Activated CD8-positive, alpha-beta T cell treated with anti-CD3 and anti-CD28 coated beads for 36 hours (primary cell): ENCODE measurements at regions of chr1 and their contacts with region 1.

Region 1: DNA sequence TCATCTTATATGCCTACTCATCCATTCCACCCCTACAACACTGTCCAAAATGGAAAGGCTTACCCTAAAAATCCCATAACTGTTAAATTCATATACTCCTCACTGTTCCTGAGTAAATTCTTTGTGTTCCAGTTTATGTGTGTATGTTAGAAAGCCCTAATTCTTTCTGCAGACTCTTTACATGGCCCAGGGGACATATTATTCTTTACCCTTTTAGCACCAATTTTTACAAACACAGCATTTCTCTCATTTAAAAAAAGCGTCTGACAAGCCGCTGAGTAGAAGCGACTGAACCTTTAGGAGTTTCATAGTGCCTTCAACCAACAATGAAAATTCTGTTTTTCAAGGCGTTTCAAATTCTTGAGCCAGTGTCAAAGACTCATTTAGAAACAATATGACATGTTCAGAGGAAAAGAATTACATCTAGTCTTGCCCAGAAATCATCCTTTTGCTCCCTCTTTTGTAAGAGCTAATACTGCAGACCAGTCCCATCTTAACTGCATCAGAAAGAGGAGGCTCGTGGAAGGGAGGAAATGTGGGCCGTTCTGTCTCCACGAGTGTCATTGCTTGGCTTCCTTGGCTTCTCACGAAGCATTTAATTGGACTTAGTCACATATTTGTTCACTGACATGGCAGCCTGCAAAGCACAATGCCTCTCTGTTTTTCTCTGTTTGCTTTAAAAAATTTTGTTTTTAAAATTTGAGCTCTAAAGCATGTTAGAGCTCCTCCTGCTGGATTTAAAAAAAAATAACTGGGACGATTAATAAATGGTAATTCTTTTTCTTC is 21.3 kb upstream of the C1orf105 start:
- DNase-seq: peak; percentile 30
- ATAC-seq: peak; percentile 30
- H3K4me3 Mint-ChIP-seq: peak overlapping the region; percentile 40
- H3K27ac Mint-ChIP-seq: peak overlapping the region; percentile 71
- H3K4me1 Mint-ChIP-seq: peaks cover 71% of the 10 kb centered on the region
- H3K27me3 Mint-ChIP-seq: no peaks in the 10 kb centered on the region
- CTCF ChIP-seq: peak; percentile 83

Region 2: GRCh38 chr1:172089768-172090510 is 309.2 kb before region 1 on chr1:
- CTCF ChIA-PET with region 1: interaction called, 21 read pairs
- POLR2A ChIA-PET with region 1: no interaction called
- intact Hi-C with region 1: loop called (anchors 1 kb)
- DNase-seq: peak; percentile 82
- ATAC-seq: peak; percentile 90
- H3K4me3 Mint-ChIP-seq: no peak overlapping the region
- H3K27ac Mint-ChIP-seq: no peak overlapping the region
- H3K4me1 Mint-ChIP-seq: peaks cover 1% of the 10 kb centered on the region
- H3K27me3 Mint-ChIP-seq: no peaks in the 10 kb centered on the region
- CTCF ChIP-seq: peak; percentile 83

Region 3: DNA sequence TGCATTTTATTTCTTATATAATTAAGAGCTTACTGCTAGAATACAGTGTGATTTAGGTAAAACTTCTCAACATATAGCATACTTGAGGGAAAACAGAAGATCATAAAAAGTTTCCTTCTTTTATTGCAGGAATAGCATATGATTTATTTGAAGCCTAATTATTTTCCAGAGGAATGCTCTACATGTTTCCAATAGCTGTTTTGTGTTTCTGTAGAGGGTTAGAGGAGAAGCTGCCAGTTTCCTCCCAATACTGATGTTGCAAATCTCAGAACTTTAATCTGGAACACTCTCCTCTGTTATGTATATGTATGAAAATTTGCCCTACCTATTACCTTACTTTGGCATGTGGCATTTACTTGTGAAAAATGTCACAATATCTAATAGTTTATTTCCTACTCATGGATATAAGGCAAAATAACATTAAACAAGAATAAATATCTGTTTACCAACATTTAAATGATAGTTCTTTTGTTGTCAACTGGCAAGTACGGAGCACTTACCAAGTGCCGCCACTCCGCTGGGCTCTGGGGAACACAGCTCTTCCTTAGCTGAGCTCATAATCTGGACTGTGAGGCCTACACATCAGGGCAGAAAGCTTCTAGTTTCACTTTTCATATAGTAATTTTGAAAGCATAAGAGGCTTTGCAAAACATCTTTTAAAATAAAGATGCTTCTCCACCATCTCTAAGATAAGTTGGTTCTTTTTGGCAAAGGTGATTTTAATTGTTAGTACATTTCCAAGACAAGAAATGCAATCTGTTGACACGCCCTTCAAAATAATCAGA is 218.5 kb before region 1 on chr1:
- CTCF ChIA-PET with region 1: interaction called, 5 read pairs
- POLR2A ChIA-PET with region 1: no interaction called
- intact Hi-C with region 1: loop called (anchors 5 kb)
- DNase-seq: peak; percentile 59
- ATAC-seq: peak; percentile 69
- H3K4me3 Mint-ChIP-seq: peak overlapping the region; percentile 73
- H3K27ac Mint-ChIP-seq: peak overlapping the region; percentile 97
- H3K4me1 Mint-ChIP-seq: peaks cover 30% of the 10 kb centered on the region
- H3K27me3 Mint-ChIP-seq: no peaks in the 10 kb centered on the region
- CTCF ChIP-seq: no peak

Region 4: DNA sequence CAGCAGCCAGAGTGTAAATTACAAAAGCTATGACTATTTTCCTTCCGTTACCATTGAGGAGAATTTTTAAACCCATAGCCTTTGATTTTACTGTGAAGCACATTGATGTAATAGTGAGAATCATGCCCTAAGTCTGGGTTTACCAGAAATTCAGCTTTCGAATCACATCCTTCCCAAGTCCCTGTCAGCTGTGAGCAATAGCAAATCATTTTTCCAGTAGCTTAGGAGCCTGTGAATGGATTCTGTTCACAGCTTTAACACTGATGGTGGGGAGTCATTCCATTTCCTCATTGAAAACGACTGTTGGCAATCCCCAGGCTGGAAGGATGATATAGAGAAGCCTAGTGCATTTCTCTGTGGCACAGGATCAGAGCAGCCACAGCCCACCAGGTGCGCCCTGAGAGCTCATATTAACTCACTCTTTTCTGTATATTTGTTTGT is 60.8 kb before region 1 on chr1:
- CTCF ChIA-PET with region 1: interaction called, 14 read pairs
- POLR2A ChIA-PET with region 1: interaction called, 5 read pairs
- intact Hi-C with region 1: no loop called
- DNase-seq: peak; percentile 77
- ATAC-seq: peak; percentile 86
- H3K4me3 Mint-ChIP-seq: no peak overlapping the region
- H3K27ac Mint-ChIP-seq: peak overlapping the region; percentile 66
- H3K4me1 Mint-ChIP-seq: peaks cover 31% of the 10 kb centered on the region
- H3K27me3 Mint-ChIP-seq: no peaks in the 10 kb centered on the region
- CTCF ChIP-seq: no peak

Region 5: DNA sequence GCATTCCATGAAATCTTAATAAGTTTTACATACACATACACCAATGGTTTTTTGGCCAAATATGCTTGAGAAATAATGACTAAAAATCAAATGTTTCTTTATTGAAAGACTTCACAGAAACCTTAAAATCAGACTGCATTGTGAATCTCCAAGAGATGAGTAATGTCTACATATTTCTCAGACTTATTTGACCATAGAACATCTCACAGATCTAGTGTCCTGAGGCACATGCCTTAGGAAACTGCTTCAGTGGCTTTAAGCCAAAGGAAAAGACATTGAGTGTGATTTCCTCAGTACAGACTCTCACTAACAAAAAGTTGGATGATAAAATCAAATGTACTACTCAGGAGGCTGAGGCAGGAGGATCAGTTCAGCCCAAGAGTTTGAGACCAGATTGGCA is 15.2 kb after region 1 on chr1:
- CTCF ChIA-PET with region 1: interaction called, 19 read pairs
- POLR2A ChIA-PET with region 1: no interaction called
- intact Hi-C with region 1: no loop called
- DNase-seq: no peak
- ATAC-seq: no peak
- H3K4me3 Mint-ChIP-seq: no peak overlapping the region
- H3K27ac Mint-ChIP-seq: no peak overlapping the region
- H3K4me1 Mint-ChIP-seq: peaks cover 7% of the 10 kb centered on the region
- H3K27me3 Mint-ChIP-seq: no peaks in the 10 kb centered on the region
- CTCF ChIP-seq: no peak

Region 6: GRCh38 chr1:172630056-172630818 is 231.1 kb after region 1 on chr1:
- CTCF ChIA-PET with region 1: no interaction called
- POLR2A ChIA-PET with region 1: no interaction called
- intact Hi-C with region 1: no loop called
- DNase-seq: no peak
- ATAC-seq: no peak
- H3K4me3 Mint-ChIP-seq: no peak overlapping the region
- H3K27ac Mint-ChIP-seq: no peak overlapping the region
- H3K4me1 Mint-ChIP-seq: peaks cover 47% of the 10 kb centered on the region
- H3K27me3 Mint-ChIP-seq: peaks cover 5% of the 10 kb centered on the region
- CTCF ChIP-seq: no peak